Activated CD8-positive, alpha-beta memory T cell treated with anti-CD3 and anti-CD28 coated beads, Interleukin-2, amount 10 ng/mL, durations not matched to agents 7 days and 5 days (primary cell): ENCODE measurements at regions of chr11 and their contacts with region 1.

Region 1: GRCh38 chr11:125345421-125346178 is 150.5 kb downstream of the FEZ1 start:
- DNase-seq: peak; percentile 44
- ATAC-seq: peak; percentile 50
- H3K4me3 Mint-ChIP-seq: no peak overlapping the region
- H3K27ac Mint-ChIP-seq: no peak overlapping the region
- H3K4me1 Mint-ChIP-seq: no peaks in the 10 kb centered on the region
- H3K27me3 Mint-ChIP-seq: peaks cover 23% of the 10 kb centered on the region

Region 2: DNA sequence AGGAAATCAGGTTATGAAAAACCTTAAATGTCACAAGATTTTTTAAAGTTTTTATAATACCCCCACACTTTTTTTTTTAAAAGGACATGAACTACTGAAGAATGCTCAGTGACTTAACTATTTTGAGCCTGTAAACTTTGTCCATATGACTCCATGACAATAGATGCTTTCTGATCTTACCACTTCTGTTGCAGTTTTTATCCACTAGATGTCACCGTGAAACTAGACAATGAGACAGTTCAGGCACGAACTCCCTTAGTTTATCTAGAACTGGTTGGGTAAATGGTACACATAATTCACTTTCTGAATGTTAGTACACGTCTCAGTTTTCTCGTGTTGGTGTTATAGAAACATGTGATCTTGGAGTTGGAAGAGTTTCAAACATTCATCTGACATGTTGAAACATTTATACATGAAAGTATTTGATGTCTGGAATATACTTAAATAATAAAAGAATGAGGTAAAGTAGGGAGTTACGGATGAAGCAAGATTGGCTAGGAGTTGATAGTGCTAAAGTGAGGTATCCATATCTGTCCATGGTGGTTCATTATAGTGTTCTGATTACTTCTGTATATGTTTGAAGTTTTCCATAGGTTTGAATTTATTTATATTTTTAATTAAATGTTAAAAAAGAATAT is 383.5 kb before region 1 on chr11:
- CTCF ChIA-PET with region 1: interaction called, 12 read pairs
- DNase-seq: no peak
- ATAC-seq: peak; percentile 88
- H3K4me3 Mint-ChIP-seq: no peak overlapping the region
- H3K27ac Mint-ChIP-seq: no peak overlapping the region
- H3K4me1 Mint-ChIP-seq: peaks cover 4% of the 10 kb centered on the region
- H3K27me3 Mint-ChIP-seq: no peaks in the 10 kb centered on the region

Region 3: DNA sequence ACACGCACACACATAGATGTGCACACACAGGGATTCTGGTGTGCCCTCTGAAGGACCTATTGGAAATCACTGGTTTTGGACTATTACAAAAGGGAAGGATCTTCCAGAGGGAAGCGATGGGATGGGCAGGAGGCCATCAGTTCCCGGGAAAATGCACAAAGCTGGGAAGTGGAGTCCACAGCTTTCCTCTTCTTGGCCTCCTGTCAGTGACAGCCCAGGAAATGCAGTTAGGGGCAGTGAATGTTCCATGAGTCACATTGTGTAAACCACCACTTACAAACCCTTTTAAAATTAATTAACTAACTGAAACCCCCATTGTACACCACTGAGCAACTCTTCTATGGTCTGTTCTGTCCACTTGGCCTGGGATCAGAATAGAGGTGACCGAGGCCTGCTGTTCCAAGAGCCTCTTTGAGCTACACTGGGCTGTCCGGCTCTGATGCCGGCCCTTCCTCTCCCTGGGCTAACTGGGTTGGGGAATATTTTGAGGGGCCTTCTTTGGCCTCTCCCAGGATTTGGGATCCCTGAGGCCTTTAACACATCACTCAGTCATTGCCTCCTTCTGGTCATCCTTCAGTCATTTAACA is 12.7 kb after region 1 on chr11:
- CTCF ChIA-PET with region 1: interaction called, 32 read pairs
- DNase-seq: no peak
- ATAC-seq: no peak
- H3K4me3 Mint-ChIP-seq: no peak overlapping the region
- H3K27ac Mint-ChIP-seq: no peak overlapping the region
- H3K4me1 Mint-ChIP-seq: peaks cover 2% of the 10 kb centered on the region
- H3K27me3 Mint-ChIP-seq: peaks cover 3% of the 10 kb centered on the region

Region 4: DNA sequence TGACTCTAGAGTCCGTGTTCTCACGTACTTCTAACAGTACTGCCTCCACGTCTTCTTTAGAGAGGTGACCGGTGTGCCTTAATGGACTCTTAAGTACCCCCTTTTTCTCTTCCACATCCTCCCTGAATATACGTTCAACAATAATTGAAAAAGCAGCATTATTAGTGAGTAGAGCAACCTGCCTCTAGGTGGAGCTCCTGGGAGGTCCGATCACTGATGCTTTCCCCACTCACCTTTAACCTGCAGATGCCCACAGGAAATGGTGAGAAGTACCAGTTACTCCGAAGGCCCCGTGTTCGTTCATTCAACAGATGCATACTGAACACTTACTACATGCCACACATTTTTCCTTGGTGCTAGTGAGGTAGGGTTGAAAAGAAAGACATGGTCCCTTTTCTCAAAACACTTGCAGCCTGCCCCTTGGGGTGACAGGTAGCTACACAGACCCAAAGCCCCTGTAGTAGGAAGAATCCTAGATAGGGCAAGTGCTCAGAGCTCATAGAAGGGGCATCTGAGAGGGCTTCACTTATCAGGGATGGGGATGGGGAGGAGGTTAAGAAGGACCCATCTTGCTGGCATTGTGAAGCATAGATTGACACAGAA is 77.7 kb after region 1 on chr11:
- CTCF ChIA-PET with region 1: no interaction called
- DNase-seq: no peak
- ATAC-seq: no peak
- H3K4me3 Mint-ChIP-seq: no peak overlapping the region
- H3K27ac Mint-ChIP-seq: no peak overlapping the region
- H3K4me1 Mint-ChIP-seq: no peaks in the 10 kb centered on the region
- H3K27me3 Mint-ChIP-seq: peaks cover 23% of the 10 kb centered on the region